Breast epithelium (tissue), 4 donors: ENCODE measurements at regions of chr13 and their contacts with region 1.

Region 1: GRCh38 chr13:25501231-25501630 is 129.5 kb downstream of the ATP8A2 start:
- DNase-seq: no peak
- H3K4me3 ChIP-seq: no peak overlapping the region
- H3K27ac ChIP-seq: no peak overlapping the region
- H3K4me1 ChIP-seq: no peaks in the 10 kb centered on the region
- H3K27me3 ChIP-seq: peaks cover 0 to 5% of the 10 kb centered on the region in 2 donors
- CTCF ChIP-seq: no peak
- POLR2A ChIP-seq: no peak

Region 2: DNA sequence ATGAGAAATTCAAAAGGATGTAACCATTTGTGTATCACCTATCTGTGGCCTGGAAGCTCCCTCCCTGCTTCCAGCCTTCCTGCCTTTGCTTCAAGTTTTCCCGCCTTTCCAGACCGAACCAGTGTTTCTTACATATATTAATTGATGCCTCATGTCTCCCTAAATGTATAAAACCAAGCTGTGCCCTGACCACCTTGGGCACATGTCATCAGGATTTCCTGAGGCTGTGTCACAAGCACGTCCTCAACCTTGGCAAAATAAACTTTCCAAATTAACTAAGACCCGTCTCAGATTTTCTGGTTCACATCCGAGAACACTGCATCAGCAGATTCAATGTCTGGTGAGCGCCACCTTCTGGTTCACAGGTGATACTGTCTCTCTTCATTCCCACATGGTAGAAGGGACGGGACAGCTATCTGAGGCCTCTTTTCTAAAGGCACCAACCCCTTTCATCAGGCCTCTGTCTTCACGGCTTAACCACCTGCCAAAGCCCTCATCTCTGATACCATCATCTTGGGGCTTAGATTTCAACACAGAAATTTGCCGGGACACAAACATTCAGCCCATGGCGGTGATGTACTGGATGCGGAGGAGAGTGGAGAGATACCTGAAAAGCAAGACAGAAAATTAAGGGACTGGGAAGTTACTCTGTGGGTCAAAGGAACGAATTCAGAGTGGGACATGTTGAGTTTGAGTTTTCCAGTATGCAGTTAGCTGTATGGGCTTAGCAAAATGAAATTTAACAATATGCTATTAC is 464.0 kb before region 1 on chr13:
- intact Hi-C with region 1: no loop called
- DNase-seq: no peak
- H3K4me3 ChIP-seq: no peak overlapping the region
- H3K27ac ChIP-seq: no peak overlapping the region
- H3K4me1 ChIP-seq: no peaks in the 10 kb centered on the region
- H3K27me3 ChIP-seq: peaks cover 0 to 15% of the 10 kb centered on the region in 2 donors
- CTCF ChIP-seq: peak; percentile 14 to 64 (median 53)
- POLR2A ChIP-seq: no peak

Region 3: DNA sequence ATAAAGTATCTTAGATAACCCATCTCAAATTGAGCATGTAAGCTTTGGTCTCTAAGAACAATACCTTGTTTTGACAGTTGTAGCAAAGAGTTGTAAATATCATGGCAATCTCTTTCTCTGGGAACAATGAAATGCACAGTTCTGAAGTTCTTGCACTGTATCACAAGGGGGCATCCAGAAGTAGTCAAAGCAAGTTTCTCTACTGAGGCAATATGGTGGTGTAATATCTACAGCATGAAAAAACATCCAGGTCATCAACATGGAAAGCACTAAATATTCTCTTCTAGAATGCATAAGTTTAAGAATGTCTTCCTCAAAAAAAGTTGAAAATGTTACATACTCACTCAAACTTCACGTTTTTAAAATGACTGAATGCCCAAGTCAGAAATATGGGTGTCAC is 233.5 kb before region 1 on chr13:
- intact Hi-C with region 1: no loop called
- DNase-seq: no peak
- H3K4me3 ChIP-seq: no peak overlapping the region
- H3K27ac ChIP-seq: no peak overlapping the region
- H3K4me1 ChIP-seq: no peaks in the 10 kb centered on the region
- H3K27me3 ChIP-seq: no peaks in the 10 kb centered on the region
- CTCF ChIP-seq: no peak
- POLR2A ChIP-seq: no peak

Region 4: GRCh38 chr13:25886438-25887214 is 385.4 kb after region 1 on chr13:
- intact Hi-C with region 1: no loop called
- DNase-seq: no peak
- H3K4me3 ChIP-seq: no peak overlapping the region
- H3K27ac ChIP-seq: no peak overlapping the region
- H3K4me1 ChIP-seq: no peaks in the 10 kb centered on the region
- H3K27me3 ChIP-seq: no peaks in the 10 kb centered on the region
- CTCF ChIP-seq: no peak
- POLR2A ChIP-seq: no peak

Region 5: GRCh38 chr13:26819046-26819445 is 1317.8 kb after region 1 on chr13:
- intact Hi-C with region 1: loop called (anchors 5 kb)
- DNase-seq: no peak
- H3K4me3 ChIP-seq: no peak overlapping the region
- H3K27ac ChIP-seq: no peak overlapping the region
- H3K4me1 ChIP-seq: no peaks in the 10 kb centered on the region
- H3K27me3 ChIP-seq: no peaks in the 10 kb centered on the region
- CTCF ChIP-seq: no peak
- POLR2A ChIP-seq: no peak

Region 6: DNA sequence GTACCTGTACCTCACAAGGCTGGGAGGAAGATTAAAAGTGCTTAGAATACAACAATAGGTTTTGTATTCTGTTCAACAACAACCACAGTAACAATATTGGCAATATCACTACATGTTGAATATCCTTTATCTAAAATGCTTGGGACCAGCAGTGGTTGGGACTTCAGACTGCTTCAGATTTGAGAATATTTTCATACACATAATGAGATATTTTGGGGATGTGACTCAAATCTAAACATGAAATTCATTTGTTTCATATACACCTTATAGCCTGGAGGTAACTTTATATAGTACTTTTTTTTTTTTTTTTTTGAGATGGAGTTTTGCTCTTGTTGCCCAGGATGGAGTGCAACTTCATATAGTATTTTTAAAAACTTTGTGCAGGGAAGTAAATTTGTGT is 1596.5 kb after region 1 on chr13:
- intact Hi-C with region 1: no loop called
- DNase-seq: no peak
- H3K4me3 ChIP-seq: no peak overlapping the region
- H3K27ac ChIP-seq: no peak overlapping the region
- H3K4me1 ChIP-seq: no peaks in the 10 kb centered on the region
- H3K27me3 ChIP-seq: no peaks in the 10 kb centered on the region
- CTCF ChIP-seq: no peak
- POLR2A ChIP-seq: no peak